Gastrocnemius medialis (tissue), 4 donors: ENCODE measurements at regions of chr1 and their contacts with region 1.

Region 1: GRCh38 chr1:15703562-15703961 is 19.4 kb downstream of the PLEKHM2 start:
- DNase-seq: peak; percentile 71 to 79
- ATAC-seq: peak; percentile 40 to 46
- H3K4me3 ChIP-seq: no peak overlapping the region
- H3K27ac ChIP-seq: peak overlapping the region; percentile 93 to 96 (median 96)
- H3K4me1 ChIP-seq: peaks cover 53 to 67% of the 10 kb centered on the region in 2 donors
- H3K27me3 ChIP-seq: no peaks in the 10 kb centered on the region
- CTCF ChIP-seq: no peak
- POLR2A ChIP-seq: peak; percentile 44 to 72

Region 2: DNA sequence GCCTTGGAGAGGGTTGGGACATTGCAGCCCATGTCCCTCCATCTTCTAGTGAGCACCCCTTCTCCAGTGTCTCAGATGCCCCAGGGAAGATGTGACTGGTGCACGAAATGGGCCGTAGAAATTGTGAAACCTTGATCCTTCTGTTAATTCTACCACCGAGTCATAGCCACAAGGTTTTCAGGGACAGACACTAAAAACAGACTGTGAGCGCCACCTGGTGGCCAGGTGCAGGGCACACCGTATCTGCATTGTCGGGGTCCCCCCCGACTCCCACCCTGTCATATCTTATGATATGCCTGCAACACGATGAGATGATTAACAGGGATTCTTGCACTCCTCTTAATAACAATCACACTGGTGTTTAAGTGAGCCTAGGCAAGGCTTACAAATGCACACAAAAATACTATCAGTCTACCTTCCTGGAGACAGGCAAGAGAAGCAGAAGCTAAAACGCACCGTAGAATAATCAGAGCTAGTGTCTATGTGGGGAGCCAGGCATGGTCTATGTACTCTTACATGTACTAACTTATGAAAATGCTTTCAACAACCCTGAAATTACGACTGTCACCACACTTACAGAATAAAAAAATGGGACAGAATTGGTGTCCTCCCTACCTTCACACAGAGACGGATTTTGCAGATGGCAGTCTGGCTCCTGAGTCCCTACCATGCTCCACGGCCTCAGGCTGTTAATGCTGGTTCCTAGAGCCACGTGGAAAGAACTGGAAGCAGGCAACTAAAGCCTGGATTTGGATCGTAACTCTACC is 398.7 kb before region 1 on chr1:
- in situ Hi-C with region 1: no loop called
- intact Hi-C with region 1: no loop called
- DNase-seq: no peak
- ATAC-seq: no peak
- H3K4me3 ChIP-seq: no peak overlapping the region
- H3K27ac ChIP-seq: no peak overlapping the region
- H3K4me1 ChIP-seq: no peaks in the 10 kb centered on the region
- H3K27me3 ChIP-seq: no peaks in the 10 kb centered on the region
- CTCF ChIP-seq: peak; percentile 28 to 70 (median 62)
- POLR2A ChIP-seq: no peak

Region 3: DNA sequence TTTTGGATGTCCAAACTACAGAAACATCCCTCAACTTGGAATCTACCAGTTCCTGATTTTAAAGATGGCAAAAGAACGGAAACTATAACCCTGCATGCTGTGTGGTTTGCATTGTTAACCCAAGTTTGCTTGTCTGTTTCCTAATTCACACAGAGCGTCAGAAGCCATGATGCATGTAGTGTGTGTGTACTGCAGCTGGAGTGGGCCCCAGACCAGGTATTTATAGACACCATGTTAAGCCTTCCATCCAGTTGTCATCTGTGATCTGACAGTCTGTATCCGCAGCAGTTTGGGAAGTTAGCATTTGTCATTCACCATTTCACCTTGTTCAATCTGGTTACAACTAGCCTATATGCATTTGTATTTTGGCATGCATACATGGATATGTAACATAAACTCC is 47.1 kb before region 1 on chr1:
- in situ Hi-C with region 1: no loop called
- intact Hi-C with region 1: loop called (anchors 1 kb)
- DNase-seq: peak; percentile 54 to 75
- ATAC-seq: peak; percentile 89 to 92
- H3K4me3 ChIP-seq: no peak overlapping the region
- H3K27ac ChIP-seq: peak overlapping the region; percentile 79 to 91 (median 89)
- H3K4me1 ChIP-seq: peaks cover 29 to 31% of the 10 kb centered on the region in 2 donors
- H3K27me3 ChIP-seq: no peaks in the 10 kb centered on the region
- CTCF ChIP-seq: no peak
- POLR2A ChIP-seq: peak in 1 of 2 donors; percentile 21

Region 4: GRCh38 chr1:15985611-15986297 is 282.2 kb after region 1 on chr1:
- in situ Hi-C with region 1: no loop called
- intact Hi-C with region 1: no loop called
- DNase-seq: no peak
- ATAC-seq: no peak
- H3K4me3 ChIP-seq: no peak overlapping the region
- H3K27ac ChIP-seq: no peak overlapping the region
- H3K4me1 ChIP-seq: no peaks in the 10 kb centered on the region
- H3K27me3 ChIP-seq: no peaks in the 10 kb centered on the region
- CTCF ChIP-seq: no peak
- POLR2A ChIP-seq: no peak